A549 (cell line): ENCODE measurements at regions of chr22 and their contacts with region 1.

Region 1: DNA sequence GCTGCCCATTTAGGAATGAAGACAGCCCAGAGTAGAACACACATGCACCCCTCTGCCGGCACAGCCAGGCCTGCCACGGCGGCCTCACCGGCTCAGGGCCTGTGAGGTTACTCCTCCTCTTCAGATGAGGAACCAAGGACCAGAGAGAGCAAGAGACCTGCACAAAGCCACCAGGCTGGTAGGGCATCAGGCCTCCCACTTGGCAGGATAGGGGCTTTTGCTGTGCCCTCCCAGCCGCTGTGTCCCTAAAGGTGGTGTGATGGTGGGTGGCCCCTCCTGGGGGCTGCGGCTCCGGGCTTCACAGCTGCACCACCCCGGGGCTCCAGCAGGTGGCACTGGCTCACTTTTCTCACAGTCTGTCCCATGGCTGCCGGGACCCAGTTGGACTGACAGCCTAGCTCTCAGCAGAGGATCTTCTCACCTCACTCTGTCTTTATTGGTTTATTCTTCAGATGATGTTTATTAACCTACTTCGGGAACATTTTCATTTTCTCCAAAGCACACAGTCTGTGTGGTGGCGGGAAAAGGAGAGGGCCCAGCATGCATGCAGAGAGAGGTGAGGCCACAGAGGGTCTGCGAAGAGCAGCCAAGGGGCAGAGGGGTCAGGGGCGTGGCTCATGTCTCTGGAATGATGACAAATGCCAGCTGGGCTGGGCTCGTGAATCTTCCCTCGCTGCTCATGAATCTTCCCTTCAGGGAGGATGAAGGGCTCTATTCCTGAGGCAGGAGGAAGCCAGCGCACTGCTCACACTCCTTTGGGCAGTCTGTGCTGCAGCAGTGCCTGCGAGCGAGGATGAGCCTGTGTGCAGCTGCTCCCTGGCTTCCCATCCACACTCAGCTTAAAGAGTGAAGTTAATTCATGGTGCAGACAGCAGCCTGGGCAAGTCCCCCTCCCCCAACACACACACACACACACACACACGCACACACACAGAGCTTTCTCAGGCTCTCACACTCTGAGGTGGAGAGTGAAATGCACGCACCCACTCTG is 101.1 kb upstream of the PITPNB start:
- DNase-seq: peak; percentile 44 to 55
- ATAC-seq: peak; percentile 74 to 96
- H3K4me3 ChIP-seq: no peak overlapping the region
- H3K27ac ChIP-seq: no peak overlapping the region
- H3K4me1 ChIP-seq: peaks cover 8% of the 10 kb centered on the region; the same call in 1 of the 3 replicates
- CTCF ChIP-seq: peak; percentile 68
- EP300 ChIP-seq: no peak
- POLR2A ChIP-seq: no peak
- RAD21 ChIP-seq: peak; percentile 75

Region 2: GRCh38 chr22:28594797-28595462 is 574.8 kb after region 1 on chr22:
- CTCF ChIA-PET with region 1: interaction called, 21 read pairs
- POLR2A ChIA-PET with region 1: no interaction called
- DNase-seq: peak; percentile 9 to 61
- ATAC-seq: peak; percentile 92 to 95
- H3K4me3 ChIP-seq: no peak overlapping the region
- H3K27ac ChIP-seq: no peak overlapping the region
- H3K4me1 ChIP-seq: peaks cover 29% of the 10 kb centered on the region
- CTCF ChIP-seq: peak; percentile 76
- EP300 ChIP-seq: no peak
- POLR2A ChIP-seq: no peak
- RAD21 ChIP-seq: peak; percentile 87 to 91